ENCODE measurements at regions of chrX and their contacts with region 1.

Region 1: GRCh38 chrX:13688958-13689740 is at the start of gene RAB9A:
- DNase-seq: peak; percentile 62 to 85 (median 76)
- ATAC-seq: peak; percentile 96
- H3K4me3 ChIP-seq: peak within 1 kb of the TSS; percentile 72
- H3K4me3 Mint-ChIP-seq: peak within 1 kb of the TSS; percentile 79 to 96 (median 92)
- H3K27ac ChIP-seq: peak within 1 kb of the TSS; percentile 84
- H3K27ac Mint-ChIP-seq: peak within 1 kb of the TSS; percentile 86 to 98 (median 95)
- H3K4me1 ChIP-seq: peaks cover 14 to 20% of the 10 kb centered on the region in 2 donors
- H3K4me1 Mint-ChIP-seq: peaks cover 25 to 55% (median 40%) of the 10 kb centered on the region in 7 donors
- H3K27me3 ChIP-seq: no peaks in the 10 kb centered on the region
- H3K27me3 Mint-ChIP-seq: no peaks in the 10 kb centered on the region
- total RNA-seq, gene RAB9A: 10.1 to 22.8 (median 18.3) TPM

Region 2: DNA sequence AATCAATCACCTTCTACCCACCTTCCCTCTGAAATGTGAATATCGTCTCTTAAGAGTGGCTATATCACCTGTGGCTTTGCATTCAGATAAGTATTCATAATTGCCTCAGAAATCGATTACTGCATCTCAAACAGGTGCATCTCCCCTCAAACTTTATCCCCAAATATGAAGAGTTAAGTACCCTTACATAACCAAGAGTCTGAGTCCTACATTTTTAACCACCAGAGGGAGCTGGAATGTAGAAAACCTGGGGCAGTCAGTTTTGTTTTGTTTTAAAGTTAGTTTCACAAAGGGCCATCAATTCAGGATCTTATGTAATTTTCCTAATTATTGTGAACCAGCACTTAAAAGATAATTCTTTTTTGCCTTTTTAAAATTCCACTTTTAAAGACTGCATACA is 30.5 kb before region 1 on chrX:
- CTCF ChIA-PET with region 1: interaction called, 3 read pairs
- POLR2A ChIA-PET with region 1: interaction called, 8 read pairs
- intact Hi-C with region 1: loop called (anchors 1 kb)
- DNase-seq: peak in 7 of 9 donors; percentile 36 to 69 (median 63)
- ATAC-seq: peak; percentile 71
- H3K4me3 ChIP-seq: no peak overlapping the region
- H3K4me3 Mint-ChIP-seq: peak overlapping the region in 1 of 10 donors; percentile 12
- H3K27ac ChIP-seq: peak overlapping the region; percentile 56
- H3K27ac Mint-ChIP-seq: peak overlapping the region in 8 of 9 donors; percentile 43 to 88 (median 78)
- H3K4me1 ChIP-seq: peaks cover 9 to 10% of the 10 kb centered on the region in 2 donors
- H3K4me1 Mint-ChIP-seq: peaks cover 0 to 34% (median 23%) of the 10 kb centered on the region in 7 donors
- H3K27me3 ChIP-seq: no peaks in the 10 kb centered on the region
- H3K27me3 Mint-ChIP-seq: no peaks in the 10 kb centered on the region

Region 3: DNA sequence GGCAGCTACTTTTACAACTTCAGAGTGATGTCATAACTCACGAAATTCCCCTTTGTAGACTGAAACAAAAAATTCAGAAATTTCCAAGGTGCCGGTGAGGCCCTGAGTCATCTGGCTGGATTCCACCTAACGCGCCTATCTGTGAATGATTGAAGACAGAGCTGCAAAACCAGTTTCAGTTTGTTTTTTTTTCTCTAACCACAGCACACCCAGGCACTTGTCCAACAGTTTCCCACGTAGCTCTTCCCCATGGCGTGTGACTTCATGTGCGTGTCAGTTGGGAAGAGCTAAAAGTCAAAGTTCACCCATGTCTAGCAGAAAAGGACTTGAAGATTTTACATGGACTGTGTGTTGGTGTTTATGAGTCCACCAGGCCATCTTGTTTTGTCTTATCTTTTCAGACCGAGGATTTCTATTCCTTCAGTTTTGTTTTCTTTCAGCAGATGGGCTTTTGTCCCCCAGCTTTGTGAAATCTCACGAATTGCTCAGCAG is 19.9 kb before region 1 on chrX:
- CTCF ChIA-PET with region 1: no interaction called
- POLR2A ChIA-PET with region 1: interaction called, 3 read pairs
- intact Hi-C with region 1: loop called in 1 of 2 experiments (anchors 2 kb)
- DNase-seq: peak in 2 of 9 donors; percentile 36 to 62
- ATAC-seq: peak; percentile 90
- H3K4me3 ChIP-seq: no peak overlapping the region
- H3K4me3 Mint-ChIP-seq: peak overlapping the region in 3 of 10 donors; percentile 16 to 46 (median 30)
- H3K27ac ChIP-seq: no peak overlapping the region
- H3K27ac Mint-ChIP-seq: peak overlapping the region in 4 of 9 donors; percentile 14 to 77 (median 70)
- H3K4me1 ChIP-seq: no peaks in the 10 kb centered on the region
- H3K4me1 Mint-ChIP-seq: peaks cover 0 to 4% (median 0%) of the 10 kb centered on the region in 7 donors
- H3K27me3 ChIP-seq: no peaks in the 10 kb centered on the region
- H3K27me3 Mint-ChIP-seq: no peaks in the 10 kb centered on the region

Region 4: DNA sequence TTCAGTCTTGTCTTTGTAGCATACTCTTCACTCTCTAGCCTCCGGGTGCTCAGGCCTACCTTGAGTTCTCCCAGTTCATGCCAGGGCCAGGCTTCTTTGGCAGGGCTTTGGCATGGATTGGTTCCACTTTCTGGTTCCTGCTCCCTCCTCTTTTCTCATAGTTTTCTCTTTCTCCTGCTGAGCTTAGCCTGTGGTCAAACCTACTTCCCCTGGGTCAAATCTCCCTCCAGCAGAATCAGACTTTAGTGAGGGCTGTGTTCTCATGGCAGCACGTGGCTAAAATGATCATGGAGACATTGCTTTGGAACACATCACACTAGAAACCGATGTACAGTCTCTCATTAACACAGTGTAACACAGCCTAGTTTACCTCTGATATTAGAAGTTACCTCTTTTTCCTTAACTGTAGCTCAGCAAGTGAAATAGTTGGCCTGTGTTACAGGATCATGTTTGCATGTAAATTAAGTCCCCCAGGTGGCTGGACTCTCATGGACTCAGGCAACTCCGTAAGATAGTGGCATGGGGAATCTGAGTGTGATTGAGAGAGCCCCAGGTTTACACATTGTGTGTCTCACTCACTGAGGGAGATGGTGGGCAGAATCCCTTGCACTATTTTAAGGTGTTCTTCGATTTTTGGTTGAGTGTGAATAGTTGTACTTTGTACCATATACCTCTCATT is 13.1 kb after region 1 on chrX:
- CTCF ChIA-PET with region 1: no interaction called
- POLR2A ChIA-PET with region 1: interaction called, 4 read pairs
- intact Hi-C with region 1: loop called in 1 of 2 experiments (anchors 2 kb)
- DNase-seq: no peak
- ATAC-seq: no peak
- H3K4me3 ChIP-seq: no peak overlapping the region
- H3K4me3 Mint-ChIP-seq: peak overlapping the region in 3 of 10 donors; percentile 5 to 31 (median 13)
- H3K27ac ChIP-seq: peak overlapping the region; percentile 34
- H3K27ac Mint-ChIP-seq: peak overlapping the region in 6 of 9 donors; percentile 31 to 86 (median 66)
- H3K4me1 ChIP-seq: peaks cover 0 to 22% of the 10 kb centered on the region in 2 donors
- H3K4me1 Mint-ChIP-seq: peaks cover 14 to 64% (median 32%) of the 10 kb centered on the region in 7 donors
- H3K27me3 ChIP-seq: no peaks in the 10 kb centered on the region
- H3K27me3 Mint-ChIP-seq: no peaks in the 10 kb centered on the region

Region 5: GRCh38 chrX:13734278-13735172 is 45.4 kb after region 1 on chrX and contains the starts of genes OFD1 and TRAPPC2:
- CTCF ChIA-PET with region 1: interaction called, 4 read pairs
- POLR2A ChIA-PET with region 1: interaction called, 39 read pairs
- intact Hi-C with region 1: loop called (anchors 1 kb)
- DNase-seq: peak; percentile 76 to 92 (median 87)
- ATAC-seq: peak; percentile 94
- H3K4me3 ChIP-seq: peak within 1 kb of the TSS; percentile 85
- H3K4me3 Mint-ChIP-seq: peak within 1 kb of the TSS; percentile 82 to 99 (median 94)
- H3K27ac ChIP-seq: peak within 1 kb of the TSS; percentile 99
- H3K27ac Mint-ChIP-seq: peak within 1 kb of the TSS; percentile 95 to 99 (median 97)
- H3K4me1 ChIP-seq: peaks cover 12 to 20% of the 10 kb centered on the region in 2 donors
- H3K4me1 Mint-ChIP-seq: peaks cover 21 to 66% (median 58%) of the 10 kb centered on the region in 7 donors
- H3K27me3 ChIP-seq: no peaks in the 10 kb centered on the region
- H3K27me3 Mint-ChIP-seq: no peaks in the 10 kb centered on the region
- total RNA-seq, gene OFD1: 30.4 to 142 (median 72.5) TPM
- total RNA-seq, gene TRAPPC2: 20.7 to 31.1 (median 23.5) TPM

Region 6: GRCh38 chrX:14377427-14377826 is 688.3 kb after region 1 on chrX:
- CTCF ChIA-PET with region 1: no interaction called
- POLR2A ChIA-PET with region 1: no interaction called
- intact Hi-C with region 1: no loop called
- DNase-seq: no peak
- ATAC-seq: no peak
- H3K4me3 ChIP-seq: no peak overlapping the region
- H3K4me3 Mint-ChIP-seq: no peak overlapping the region
- H3K27ac ChIP-seq: no peak overlapping the region
- H3K27ac Mint-ChIP-seq: no peak overlapping the region
- H3K4me1 ChIP-seq: no peaks in the 10 kb centered on the region
- H3K4me1 Mint-ChIP-seq: no peaks in the 10 kb centered on the region
- H3K27me3 ChIP-seq: no peaks in the 10 kb centered on the region
- H3K27me3 Mint-ChIP-seq: no peaks in the 10 kb centered on the region

Measured in naive thymus-derived CD4-positive, alpha-beta T cell (primary cell).